Sigmoid colon (tissue), 7 donors: ENCODE measurements at regions of chr10 and their contacts with region 1.

Region 1: DNA sequence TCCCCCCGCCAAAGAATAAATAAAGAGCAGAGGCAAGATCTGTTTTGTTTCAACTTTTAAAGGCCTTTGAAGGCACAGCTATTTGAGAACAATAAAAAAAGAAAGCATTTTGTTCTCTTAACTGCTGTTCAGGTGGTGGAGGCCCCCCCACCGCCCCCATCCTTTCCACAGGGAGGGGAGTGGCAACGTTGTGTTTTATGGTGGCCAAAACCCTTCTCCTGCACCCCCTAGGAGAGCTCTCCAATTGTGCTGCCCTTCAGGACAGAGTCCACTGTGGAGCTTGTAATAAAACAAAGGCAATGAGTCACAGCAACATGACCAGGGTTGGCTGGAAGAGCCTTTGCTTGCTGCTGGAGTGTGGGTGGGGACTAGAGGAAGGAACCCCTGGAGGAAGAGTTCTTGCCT is 987.9 kb downstream of the KCNMA1 start:
- DNase-seq: peak; percentile 93
- H3K4me3 ChIP-seq: no peak overlapping the region
- H3K27ac ChIP-seq: peak overlapping the region in 3 of 4 donors; percentile 77 to 81 (median 80)
- H3K4me1 ChIP-seq: peaks cover 0 to 72% (median 42%) of the 10 kb centered on the region in 4 donors
- H3K27me3 ChIP-seq: no peaks in the 10 kb centered on the region
- CTCF ChIP-seq: no peak
- EP300 ChIP-seq: peak; percentile 49 to 90 (median 68)
- POLR2A ChIP-seq: no peak

Region 2: GRCh38 chr10:76336213-76336963 is 313.3 kb before region 1 on chr10:
- intact Hi-C with region 1: loop called (anchors 10 kb)
- DNase-seq: peak; percentile 73
- H3K4me3 ChIP-seq: no peak overlapping the region
- H3K27ac ChIP-seq: peak overlapping the region; percentile 10 to 83 (median 78)
- H3K4me1 ChIP-seq: peaks cover 0 to 70% (median 68%) of the 10 kb centered on the region in 4 donors
- H3K27me3 ChIP-seq: no peaks in the 10 kb centered on the region
- CTCF ChIP-seq: no peak
- EP300 ChIP-seq: peak in 1 of 4 donors; percentile 21
- POLR2A ChIP-seq: no peak

Region 3: DNA sequence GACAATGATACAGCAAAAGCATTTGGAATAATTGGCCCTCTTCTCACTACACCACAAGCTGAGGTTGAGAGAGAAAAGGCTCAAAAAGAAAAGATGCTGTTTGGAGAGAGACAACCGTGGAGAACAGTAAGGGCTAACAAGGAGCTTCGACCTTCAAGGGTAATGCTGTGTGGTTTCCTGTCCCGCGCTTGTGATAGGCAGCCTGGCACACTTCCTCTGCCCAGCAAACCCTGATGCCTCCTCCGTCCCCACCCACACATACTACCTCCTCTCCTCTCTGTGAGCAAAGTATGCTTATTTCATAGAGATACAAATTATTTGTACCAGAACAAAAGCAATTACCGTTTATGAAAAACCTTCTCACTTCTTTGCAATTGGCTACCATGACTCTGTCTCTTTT is 232.5 kb after region 1 on chr10:
- intact Hi-C with region 1: loop called (anchors 5 kb)
- DNase-seq: no peak
- H3K4me3 ChIP-seq: no peak overlapping the region
- H3K27ac ChIP-seq: no peak overlapping the region
- H3K4me1 ChIP-seq: peaks cover 0 to 49% (median 30%) of the 10 kb centered on the region in 4 donors
- H3K27me3 ChIP-seq: no peaks in the 10 kb centered on the region
- CTCF ChIP-seq: no peak
- EP300 ChIP-seq: no peak
- POLR2A ChIP-seq: no peak